ENCODE measurements at regions of chr11 and their contacts with region 1.

Region 1: DNA sequence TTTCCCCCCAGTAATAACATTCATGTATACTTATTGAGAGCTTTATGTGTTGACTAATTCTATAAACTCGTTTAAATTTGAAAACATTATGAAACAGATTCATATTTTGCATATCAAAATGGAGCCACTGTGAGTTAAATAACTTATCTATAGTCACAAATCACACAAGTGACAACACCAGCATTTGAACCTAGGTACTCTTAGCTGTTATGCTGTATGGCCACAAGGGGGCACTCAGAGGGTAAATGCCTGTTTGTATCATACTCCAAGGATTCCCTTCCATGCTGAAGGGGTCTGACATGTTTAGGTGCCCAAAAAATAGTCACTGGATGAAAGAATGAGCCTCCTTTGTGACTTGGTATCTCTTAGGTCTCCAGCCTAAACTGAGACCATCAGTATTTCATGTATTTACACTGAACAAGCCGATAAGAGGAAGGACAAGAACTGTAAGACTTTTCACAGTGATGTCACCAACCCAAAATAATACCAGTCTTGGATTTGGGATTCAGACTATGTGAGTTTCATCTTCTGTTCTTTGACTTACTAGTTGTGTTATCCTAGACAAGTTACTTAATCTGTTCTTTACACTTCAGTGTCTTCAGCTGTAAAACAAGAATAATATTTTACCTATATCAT is 12.2 kb upstream of the OR52D1 start:
- DNase-seq: peak; percentile 50
- ATAC-seq: no peak
- H3K4me3 ChIP-seq: no peak overlapping the region
- H3K4me3 Mint-ChIP-seq: no peak overlapping the region
- H3K27ac ChIP-seq: no peak overlapping the region
- H3K27ac Mint-ChIP-seq: no peak overlapping the region
- H3K4me1 ChIP-seq: no peaks in the 10 kb centered on the region
- H3K4me1 Mint-ChIP-seq: no peaks in the 10 kb centered on the region
- H3K27me3 ChIP-seq: no peaks in the 10 kb centered on the region
- H3K27me3 Mint-ChIP-seq: peaks cover 4% of the 10 kb centered on the region
- CTCF ChIP-seq: peak; percentile 87

Region 2: DNA sequence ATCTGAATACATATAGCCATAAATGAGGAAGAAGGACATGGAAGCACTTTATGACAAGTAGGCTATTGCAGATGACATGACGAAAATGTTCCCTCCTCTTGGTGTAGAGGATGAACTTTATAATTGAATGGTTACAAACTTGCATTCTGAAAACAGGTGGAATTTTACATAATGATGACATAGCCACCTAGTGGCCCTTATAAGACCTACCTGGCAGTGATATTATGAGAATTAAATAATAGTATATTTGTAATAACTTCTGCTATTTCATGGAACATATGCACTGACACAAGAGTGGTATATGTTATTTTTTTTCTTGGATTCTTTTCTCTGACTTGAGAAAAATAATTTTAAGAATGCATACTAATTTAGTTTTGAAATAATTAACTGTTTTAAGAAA is 236.2 kb after region 1 on chr11:
- CTCF ChIA-PET with region 1: interaction called, 4 read pairs
- POLR2A ChIA-PET with region 1: no interaction called
- intact Hi-C with region 1: loop called (anchors 10 kb)
- DNase-seq: peak; percentile 48
- ATAC-seq: peak; percentile 39
- H3K4me3 ChIP-seq: no peak overlapping the region
- H3K4me3 Mint-ChIP-seq: no peak overlapping the region
- H3K27ac ChIP-seq: no peak overlapping the region
- H3K27ac Mint-ChIP-seq: peak overlapping the region; percentile 66
- H3K4me1 ChIP-seq: no peaks in the 10 kb centered on the region
- H3K4me1 Mint-ChIP-seq: peaks cover 6% of the 10 kb centered on the region
- H3K27me3 ChIP-seq: no peaks in the 10 kb centered on the region
- H3K27me3 Mint-ChIP-seq: no peaks in the 10 kb centered on the region
- CTCF ChIP-seq: peak; percentile 73

Region 3: GRCh38 chr11:5808500-5809121 is 332.3 kb after region 1 on chr11 and contains the start of gene OR52N2:
- CTCF ChIA-PET with region 1: interaction called, 25 read pairs
- POLR2A ChIA-PET with region 1: no interaction called
- intact Hi-C with region 1: loop called (anchors 1 kb)
- DNase-seq: peak; percentile 84
- ATAC-seq: peak; percentile 91
- H3K4me3 ChIP-seq: peak within 1 kb of the TSS; percentile 52 to 66 (median 64)
- H3K4me3 Mint-ChIP-seq: peak within 1 kb of the TSS; percentile 91
- H3K27ac ChIP-seq: peak within 1 kb of the TSS in 1 of 2 donors; percentile 24
- H3K27ac Mint-ChIP-seq: no peak within 1 kb of the TSS
- H3K4me1 ChIP-seq: peaks cover 10 to 12% of the 10 kb centered on the region in 2 donors
- H3K4me1 Mint-ChIP-seq: peaks cover 12% of the 10 kb centered on the region
- H3K27me3 ChIP-seq: peaks cover 0 to 11% (median 9%) of the 10 kb centered on the region in 4 experiments
- H3K27me3 Mint-ChIP-seq: peaks cover 39% of the 10 kb centered on the region
- CTCF ChIP-seq: peak; percentile 93
- total RNA-seq, gene OR52N2: not detected in 2 replicates

Region 4: DNA sequence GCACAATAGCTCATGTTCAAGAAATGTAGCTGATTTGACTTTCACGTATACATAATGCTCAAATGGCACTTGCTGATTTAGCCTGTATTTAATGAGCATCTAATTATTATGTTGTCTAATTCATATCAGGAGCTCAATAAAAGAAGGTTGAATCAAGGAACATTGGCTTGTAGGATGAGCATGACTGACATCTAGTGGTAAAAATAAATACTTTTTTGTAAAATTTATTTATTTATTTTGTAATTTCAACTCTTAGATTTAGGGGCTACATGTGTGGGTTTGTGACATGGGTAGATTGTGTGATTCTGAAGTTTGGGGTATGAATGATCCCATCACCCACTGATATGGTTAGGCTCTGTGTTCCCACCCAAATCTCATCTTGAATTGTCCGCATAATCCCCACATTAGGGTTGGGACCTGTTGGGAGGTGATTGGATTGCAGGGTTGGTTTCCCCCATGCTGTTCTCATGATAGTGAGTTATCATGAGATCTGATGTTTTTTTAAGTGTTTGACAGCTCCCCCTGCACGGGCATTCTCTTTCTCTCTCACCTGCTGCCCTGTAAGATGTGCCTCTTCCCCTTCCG is 415.0 kb after region 1 on chr11:
- CTCF ChIA-PET with region 1: interaction called, 12 read pairs
- POLR2A ChIA-PET with region 1: no interaction called
- intact Hi-C with region 1: no loop called
- DNase-seq: peak; percentile 20
- ATAC-seq: no peak
- H3K4me3 ChIP-seq: no peak overlapping the region
- H3K4me3 Mint-ChIP-seq: no peak overlapping the region
- H3K27ac ChIP-seq: no peak overlapping the region
- H3K27ac Mint-ChIP-seq: no peak overlapping the region
- H3K4me1 ChIP-seq: no peaks in the 10 kb centered on the region
- H3K4me1 Mint-ChIP-seq: no peaks in the 10 kb centered on the region
- H3K27me3 ChIP-seq: peaks cover 0 to 3% (median 0%) of the 10 kb centered on the region in 4 experiments
- H3K27me3 Mint-ChIP-seq: peaks cover 7% of the 10 kb centered on the region
- CTCF ChIP-seq: peak; percentile 72